Left colon (tissue), 2 donors: ENCODE measurements at regions of chr5 and their contacts with region 1.

Region 1: DNA sequence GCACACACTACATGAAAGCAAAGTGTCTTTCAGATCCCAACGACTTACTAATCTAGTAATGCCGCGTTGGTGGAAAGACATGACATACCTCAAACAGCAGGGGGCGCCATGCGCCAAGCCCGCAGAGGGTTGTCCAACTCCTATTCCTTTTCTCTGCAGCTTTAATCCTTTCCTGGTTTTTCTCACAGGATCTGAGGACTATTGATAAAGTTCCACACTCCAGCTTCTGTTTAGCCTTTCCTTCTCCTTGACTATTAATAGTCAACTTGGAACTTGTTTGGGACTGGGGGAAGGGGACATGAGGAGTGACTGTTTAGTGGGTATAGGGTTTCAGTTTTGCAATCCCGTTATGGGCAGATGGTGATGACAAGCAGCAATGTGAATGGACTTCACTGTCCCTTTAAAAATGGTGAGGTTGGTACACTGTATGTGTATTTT is 62.9 kb downstream of the OTULIN start:
- DNase-seq: peak; percentile 63 to 75
- ATAC-seq: peak; percentile 70

Region 2: GRCh38 chr5:14628346-14628745 is 99.1 kb before region 1 on chr5:
- intact Hi-C with region 1: no loop called
- DNase-seq: peak in 1 of 2 donors; percentile 36
- ATAC-seq: peak; percentile 52

Region 3: DNA sequence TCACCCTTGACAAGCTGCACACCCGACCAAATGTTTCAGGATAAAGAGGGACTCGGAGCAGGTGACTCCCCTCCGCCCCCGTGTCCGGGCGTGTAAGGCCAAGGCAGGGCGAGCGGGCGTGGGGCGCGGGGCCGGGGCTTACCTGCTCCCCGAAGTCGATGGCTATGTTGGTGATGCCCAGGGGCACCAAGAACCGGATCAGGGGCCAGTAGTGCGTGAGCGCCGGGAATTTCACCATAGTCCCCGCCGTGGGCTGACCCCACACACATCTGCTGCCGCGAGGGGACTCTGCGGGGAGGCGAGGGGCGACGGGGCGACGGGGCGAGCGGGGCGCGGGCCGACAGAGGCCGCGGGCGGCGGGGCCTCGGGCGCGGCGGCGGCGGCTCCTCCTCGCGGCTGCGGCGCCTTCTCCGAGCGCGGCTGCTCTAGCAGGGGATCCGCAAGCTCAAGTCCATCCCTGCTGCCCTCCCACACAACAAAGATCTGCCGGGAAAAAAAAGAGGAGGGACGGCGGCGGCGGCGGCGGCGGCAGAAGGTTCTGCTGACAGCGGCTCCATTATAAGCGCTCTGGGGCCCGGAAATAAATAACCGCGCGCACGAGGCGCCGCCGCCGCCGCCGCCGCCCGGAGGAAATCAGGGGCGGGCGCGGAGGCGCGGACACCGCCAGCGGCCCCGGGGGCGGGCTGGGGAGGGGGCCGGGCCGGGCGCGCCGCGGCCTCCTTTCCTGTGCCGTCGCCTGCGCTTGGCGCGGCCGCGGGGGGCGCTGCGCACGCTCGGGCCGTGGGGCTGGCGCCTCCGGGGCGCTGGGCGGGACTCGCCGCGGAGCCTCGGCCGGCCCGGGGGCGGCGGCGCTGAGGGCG is 144.0 kb after region 1 on chr5 and contains the start of gene ANKH:
- intact Hi-C with region 1: loop called in 1 of 2 experiments (anchors 5 kb)
- DNase-seq: peak; percentile 64 to 83
- ATAC-seq: peak; percentile 79
- total RNA-seq, gene ANKH: 98.4 to 156 TPM

Region 4: GRCh38 chr5:15003511-15003920 is 276.1 kb after region 1 on chr5:
- intact Hi-C with region 1: loop called in 1 of 2 experiments (anchors 10 kb)
- DNase-seq: peak; percentile 44 to 56
- ATAC-seq: peak; percentile 83

Region 5: GRCh38 chr5:15013654-15014463 is 286.4 kb after region 1 on chr5:
- intact Hi-C with region 1: loop called (anchors 5 to 10 kb)
- DNase-seq: no peak
- ATAC-seq: peak; percentile 64